PC-3 (cell line): ENCODE measurements at regions of chr4 and their contacts with region 1.

Region 1: GRCh38 chr4:17636696-17637622 is 22.5 kb downstream of the MED28 start:
- DNase-seq: peak; percentile 74
- ATAC-seq: peak; percentile 99
- H3K4me3 ChIP-seq: no peak overlapping the region
- H3K27ac ChIP-seq: no peak overlapping the region
- H3K4me1 ChIP-seq: no peaks in the 10 kb centered on the region
- H3K27me3 ChIP-seq: no peaks in the 10 kb centered on the region
- CTCF ChIP-seq: peak; percentile 74

Region 2: GRCh38 chr4:17103231-17103630 is 533.7 kb before region 1 on chr4:
- CTCF ChIA-PET with region 1: no interaction called
- POLR2A ChIA-PET with region 1: no interaction called
- intact Hi-C with region 1: no loop called
- DNase-seq: no peak
- ATAC-seq: no peak
- H3K4me3 ChIP-seq: no peak overlapping the region
- H3K27ac ChIP-seq: no peak overlapping the region
- H3K4me1 ChIP-seq: no peaks in the 10 kb centered on the region
- H3K27me3 ChIP-seq: no peaks in the 10 kb centered on the region; the same call in 1 of the 2 replicates
- CTCF ChIP-seq: no peak

Region 3: GRCh38 chr4:17511950-17512795 is 124.8 kb before region 1 on chr4 and contains the start of gene QDPR:
- CTCF ChIA-PET with region 1: no interaction called
- POLR2A ChIA-PET with region 1: no interaction called
- intact Hi-C with region 1: loop called (anchors 10 kb)
- DNase-seq: peak; percentile 80
- ATAC-seq: peak; percentile 95
- H3K4me3 ChIP-seq: peak within 1 kb of the TSS; percentile 89
- H3K27ac ChIP-seq: 0 out of 2 replicates have a peak within 1 kb of the TSS, but pooled peaks have one; percentile 8
- H3K4me1 ChIP-seq: peaks cover 10% of the 10 kb centered on the region
- H3K27me3 ChIP-seq: peaks cover 16% of the 10 kb centered on the region
- CTCF ChIP-seq: no peak; the same call in 1 of the 2 replicates
- total RNA-seq, gene QDPR: 10.0 and 13.4 TPM in 2 replicates

Region 4: GRCh38 chr4:17544205-17544604 is 92.8 kb before region 1 on chr4:
- CTCF ChIA-PET with region 1: no interaction called
- POLR2A ChIA-PET with region 1: no interaction called
- intact Hi-C with region 1: loop called (anchors 1 kb)
- DNase-seq: peak; percentile 42
- ATAC-seq: peak; percentile 76
- H3K4me3 ChIP-seq: no peak overlapping the region
- H3K27ac ChIP-seq: no peak overlapping the region
- H3K4me1 ChIP-seq: peaks cover 2% of the 10 kb centered on the region; the same call in 1 of the 2 replicates
- H3K27me3 ChIP-seq: no peaks in the 10 kb centered on the region
- CTCF ChIP-seq: no peak

Region 5: GRCh38 chr4:17597517-17597916 is 39.4 kb before region 1 on chr4:
- CTCF ChIA-PET with region 1: no interaction called
- POLR2A ChIA-PET with region 1: no interaction called
- intact Hi-C with region 1: loop called (anchors 5 kb)
- DNase-seq: peak; percentile 51
- ATAC-seq: peak; percentile 84
- H3K4me3 ChIP-seq: no peak overlapping the region
- H3K27ac ChIP-seq: no peak overlapping the region
- H3K4me1 ChIP-seq: no peaks in the 10 kb centered on the region
- H3K27me3 ChIP-seq: no peaks in the 10 kb centered on the region
- CTCF ChIP-seq: peak; percentile 65

Region 6: DNA sequence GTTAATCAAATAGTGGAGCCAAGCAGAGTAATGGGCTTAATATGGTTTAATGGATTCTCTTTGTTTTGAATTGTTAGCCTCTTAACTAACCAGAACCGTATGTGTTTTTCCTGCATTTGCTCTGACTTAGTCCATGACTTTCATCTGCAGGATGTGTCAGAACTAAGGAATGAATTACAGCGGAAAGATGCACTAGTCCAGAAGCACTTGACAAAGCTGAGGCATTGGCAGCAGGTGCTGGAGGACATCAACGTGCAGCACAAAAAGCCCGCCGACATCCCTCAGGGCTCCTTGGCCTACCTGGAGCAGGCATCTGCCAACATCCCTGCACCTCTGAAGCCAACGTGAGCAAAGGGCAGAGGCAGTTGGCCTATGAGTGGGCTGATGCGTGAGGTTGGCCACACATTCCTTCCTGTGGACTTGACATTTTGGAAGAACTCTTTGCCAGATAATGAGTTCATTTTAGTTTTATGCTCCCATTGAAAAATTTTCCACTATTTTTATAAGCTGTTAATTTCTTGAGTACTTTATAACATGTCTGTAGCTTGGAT is 13.4 kb before region 1 on chr4:
- CTCF ChIA-PET with region 1: no interaction called
- POLR2A ChIA-PET with region 1: interaction called, 11 read pairs
- intact Hi-C with region 1: no loop called
- DNase-seq: no peak
- ATAC-seq: no peak
- H3K4me3 ChIP-seq: no peak overlapping the region
- H3K27ac ChIP-seq: no peak overlapping the region
- H3K4me1 ChIP-seq: peaks cover 6% of the 10 kb centered on the region; the same call in 1 of the 2 replicates
- H3K27me3 ChIP-seq: no peaks in the 10 kb centered on the region
- CTCF ChIP-seq: no peak

Region 7: GRCh38 chr4:17664755-17665154 is 27.8 kb after region 1 on chr4:
- CTCF ChIA-PET with region 1: no interaction called
- POLR2A ChIA-PET with region 1: no interaction called
- intact Hi-C with region 1: no loop called
- DNase-seq: no peak
- ATAC-seq: no peak
- H3K4me3 ChIP-seq: no peak overlapping the region
- H3K27ac ChIP-seq: no peak overlapping the region
- H3K4me1 ChIP-seq: no peaks in the 10 kb centered on the region
- H3K27me3 ChIP-seq: no peaks in the 10 kb centered on the region
- CTCF ChIP-seq: no peak